Transverse colon (tissue), 4 donors: ENCODE measurements at regions of chr1 and their contacts with region 1.

Region 1: DNA sequence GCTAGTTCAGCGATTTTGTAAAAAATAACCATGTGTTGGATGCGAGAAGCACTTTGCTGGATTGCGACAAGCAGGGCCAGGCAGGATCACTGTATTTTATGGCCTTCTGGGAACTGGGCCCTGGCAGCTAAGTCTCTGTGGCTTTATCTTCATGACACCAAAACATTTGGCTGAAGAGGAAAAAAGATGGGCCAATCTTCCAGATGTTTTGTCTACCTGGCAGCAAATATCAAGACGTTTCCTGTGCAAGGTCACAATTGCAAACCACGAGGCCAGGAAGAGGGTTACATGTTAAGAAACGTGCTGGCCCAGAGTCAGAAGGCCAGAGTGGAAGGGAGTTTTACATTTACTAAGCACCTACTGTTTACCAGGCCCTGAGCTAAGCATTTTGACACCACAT is 22.1 kb downstream of the GRIK3 start:
- DNase-seq: no peak
- H3K4me3 ChIP-seq: no peak overlapping the region
- H3K27ac ChIP-seq: no peak overlapping the region
- H3K4me1 ChIP-seq: no peaks in the 10 kb centered on the region
- H3K27me3 ChIP-seq: no peaks in the 10 kb centered on the region
- CTCF ChIP-seq: no peak
- EP300 ChIP-seq: no peak
- POLR2A ChIP-seq: no peak

Region 2: DNA sequence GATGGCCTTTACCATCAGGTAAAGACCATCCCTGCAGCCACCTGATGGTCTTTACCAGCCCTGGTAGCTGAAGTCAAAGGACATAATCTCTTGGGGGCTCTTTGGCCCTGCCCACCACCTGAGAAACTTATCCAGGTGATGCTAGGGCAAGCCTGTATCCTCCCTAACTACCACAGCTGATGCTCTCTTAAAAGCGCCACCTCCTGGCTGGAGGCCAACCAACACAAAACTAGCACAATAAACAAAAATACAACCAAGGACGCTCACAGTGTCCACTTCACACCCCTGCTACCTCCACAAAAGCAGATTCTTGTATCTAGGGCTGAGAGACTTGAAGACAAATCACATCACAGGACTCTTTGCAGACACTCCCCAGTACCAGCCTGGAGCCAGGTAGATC is 1391.4 kb after region 1 on chr1:
- in situ Hi-C with region 1: no loop called
- intact Hi-C with region 1: loop called (anchors 5 kb)
- DNase-seq: no peak
- H3K4me3 ChIP-seq: no peak overlapping the region
- H3K27ac ChIP-seq: no peak overlapping the region
- H3K4me1 ChIP-seq: no peaks in the 10 kb centered on the region
- H3K27me3 ChIP-seq: no peaks in the 10 kb centered on the region
- CTCF ChIP-seq: no peak
- EP300 ChIP-seq: no peak
- POLR2A ChIP-seq: no peak